CD8-positive, alpha-beta T cell (primary cell): ENCODE measurements at regions of chr17 and their contacts with region 1.

Region 1: GRCh38 chr17:21119247-21119918 is 7.4 kb upstream of the DHRS7B start:
- DNase-seq: peak; percentile 41 to 87 (median 71)
- ATAC-seq: peak; percentile 91
- H3K4me3 ChIP-seq: no peak overlapping the region
- H3K4me3 Mint-ChIP-seq: no peak overlapping the region
- H3K27ac ChIP-seq: no peak overlapping the region
- H3K27ac Mint-ChIP-seq: no peak overlapping the region
- H3K4me1 ChIP-seq: peaks cover 4% of the 10 kb centered on the region
- H3K4me1 Mint-ChIP-seq: peaks cover 8% of the 10 kb centered on the region
- H3K27me3 ChIP-seq: no peaks in the 10 kb centered on the region
- H3K27me3 Mint-ChIP-seq: peaks cover 3% of the 10 kb centered on the region
- CTCF ChIP-seq: peak; percentile 82

Region 2: DNA sequence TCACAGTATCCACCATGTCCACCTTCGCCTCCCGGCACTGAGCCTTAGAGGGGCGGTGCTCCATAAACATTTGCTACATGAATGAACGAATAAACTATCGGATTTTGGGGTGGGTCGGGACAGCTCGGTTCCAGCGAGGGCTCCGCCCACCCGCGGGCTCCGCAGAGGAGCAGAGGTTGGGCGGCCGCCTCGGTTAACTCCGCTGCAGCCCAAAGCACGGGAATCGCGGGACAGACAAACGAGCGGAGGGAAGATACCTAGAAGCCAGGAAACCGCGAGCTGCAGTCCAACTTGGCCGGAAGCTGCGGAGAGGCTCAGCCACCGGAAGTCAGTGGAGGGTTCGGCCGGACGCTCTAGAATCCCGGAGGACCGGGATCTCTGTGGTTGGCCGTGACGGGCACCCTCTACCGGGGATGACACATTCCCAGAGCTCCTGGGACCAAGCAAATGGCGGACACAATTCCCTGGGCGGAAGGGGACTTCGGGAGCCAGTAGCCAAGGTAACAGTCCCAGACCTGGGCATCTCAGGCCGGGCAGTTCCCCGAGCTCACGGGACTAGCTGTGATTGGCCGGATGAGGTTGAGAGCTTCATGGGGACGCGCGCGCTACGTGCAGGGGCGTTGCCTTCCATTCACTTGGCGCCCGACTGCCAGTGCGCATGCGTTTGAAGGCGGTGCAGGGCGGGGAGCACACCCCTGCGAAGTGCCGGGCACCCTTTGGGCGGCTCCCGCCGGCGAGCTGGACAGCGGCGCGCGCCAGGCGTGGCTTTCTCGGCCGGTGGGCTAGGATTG is 1741.6 kb before region 1 on chr17:
- CTCF ChIA-PET with region 1: no interaction called
- POLR2A ChIA-PET with region 1: no interaction called
- intact Hi-C with region 1: no loop called
- DNase-seq: peak; percentile 82 to 98 (median 93)
- ATAC-seq: peak; percentile 89
- H3K4me3 ChIP-seq: peak overlapping the region; percentile 81 to 96
- H3K4me3 Mint-ChIP-seq: peak overlapping the region; percentile 100
- H3K27ac ChIP-seq: peak overlapping the region; percentile 81 to 86
- H3K27ac Mint-ChIP-seq: peak overlapping the region; percentile 96
- H3K4me1 ChIP-seq: peaks cover 6% of the 10 kb centered on the region
- H3K4me1 Mint-ChIP-seq: peaks cover 15% of the 10 kb centered on the region
- H3K27me3 ChIP-seq: no peaks in the 10 kb centered on the region
- H3K27me3 Mint-ChIP-seq: no peaks in the 10 kb centered on the region
- CTCF ChIP-seq: no peak

Region 3: GRCh38 chr17:21108651-21109050 is 10.7 kb before region 1 on chr17:
- CTCF ChIA-PET with region 1: interaction called, 15 read pairs
- POLR2A ChIA-PET with region 1: interaction called, 3 read pairs
- intact Hi-C with region 1: no loop called
- DNase-seq: no peak
- ATAC-seq: no peak
- H3K4me3 ChIP-seq: no peak overlapping the region
- H3K4me3 Mint-ChIP-seq: no peak overlapping the region
- H3K27ac ChIP-seq: no peak overlapping the region
- H3K27ac Mint-ChIP-seq: no peak overlapping the region
- H3K4me1 ChIP-seq: no peaks in the 10 kb centered on the region
- H3K4me1 Mint-ChIP-seq: no peaks in the 10 kb centered on the region
- H3K27me3 ChIP-seq: no peaks in the 10 kb centered on the region
- H3K27me3 Mint-ChIP-seq: no peaks in the 10 kb centered on the region
- CTCF ChIP-seq: no peak

Region 4: DNA sequence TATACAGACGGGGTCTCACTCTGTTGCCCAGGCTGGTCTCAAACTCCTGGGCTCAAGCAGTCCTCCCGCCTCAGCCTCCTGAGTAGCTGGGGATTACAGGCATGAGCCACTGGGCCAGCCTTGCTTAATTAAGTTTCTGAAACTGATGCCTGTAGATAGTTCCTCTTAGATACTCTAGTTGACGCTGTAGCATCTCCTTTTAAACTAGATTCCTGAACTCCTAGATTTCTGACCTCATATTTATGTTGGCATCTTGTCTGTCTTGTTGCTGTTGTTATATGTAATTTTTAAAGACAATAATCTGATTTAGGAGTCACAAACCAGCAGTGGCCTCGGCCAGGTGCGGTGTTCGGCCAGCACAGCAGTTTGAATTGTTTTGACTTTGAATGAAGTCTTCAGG is 44.8 kb after region 1 on chr17:
- CTCF ChIA-PET with region 1: no interaction called
- POLR2A ChIA-PET with region 1: no interaction called
- intact Hi-C with region 1: no loop called
- DNase-seq: no peak
- ATAC-seq: no peak
- H3K4me3 ChIP-seq: no peak overlapping the region
- H3K4me3 Mint-ChIP-seq: no peak overlapping the region
- H3K27ac ChIP-seq: no peak overlapping the region
- H3K27ac Mint-ChIP-seq: no peak overlapping the region
- H3K4me1 ChIP-seq: no peaks in the 10 kb centered on the region
- H3K4me1 Mint-ChIP-seq: peaks cover 16% of the 10 kb centered on the region
- H3K27me3 ChIP-seq: no peaks in the 10 kb centered on the region
- H3K27me3 Mint-ChIP-seq: no peaks in the 10 kb centered on the region
- CTCF ChIP-seq: no peak

Region 5: DNA sequence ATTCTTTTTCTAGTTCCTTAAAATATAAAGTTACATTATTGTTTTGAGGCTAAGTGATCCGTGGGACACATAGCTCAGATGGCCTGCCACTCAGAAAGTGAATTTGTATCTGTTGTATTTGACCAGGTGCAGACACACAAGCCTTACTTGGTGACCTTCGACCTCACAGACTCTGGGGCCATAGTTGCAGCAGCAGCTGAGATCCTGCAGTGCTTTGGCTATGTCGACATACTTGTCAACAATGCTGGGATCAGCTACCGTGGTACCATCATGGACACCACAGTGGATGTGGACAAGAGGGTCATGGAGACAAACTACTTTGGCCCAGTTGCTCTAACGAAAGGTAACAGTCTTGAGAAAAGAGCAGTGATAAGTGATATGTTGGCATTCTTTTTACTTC is 64.1 kb after region 1 on chr17:
- CTCF ChIA-PET with region 1: interaction called, 3 read pairs
- POLR2A ChIA-PET with region 1: no interaction called
- intact Hi-C with region 1: loop called in 1 of 2 experiments (anchors 5 kb)
- DNase-seq: no peak
- ATAC-seq: no peak
- H3K4me3 ChIP-seq: no peak overlapping the region
- H3K4me3 Mint-ChIP-seq: no peak overlapping the region
- H3K27ac ChIP-seq: no peak overlapping the region
- H3K27ac Mint-ChIP-seq: peak overlapping the region; percentile 18
- H3K4me1 ChIP-seq: no peaks in the 10 kb centered on the region
- H3K4me1 Mint-ChIP-seq: no peaks in the 10 kb centered on the region
- H3K27me3 ChIP-seq: no peaks in the 10 kb centered on the region
- H3K27me3 Mint-ChIP-seq: no peaks in the 10 kb centered on the region
- CTCF ChIP-seq: no peak

Region 6: DNA sequence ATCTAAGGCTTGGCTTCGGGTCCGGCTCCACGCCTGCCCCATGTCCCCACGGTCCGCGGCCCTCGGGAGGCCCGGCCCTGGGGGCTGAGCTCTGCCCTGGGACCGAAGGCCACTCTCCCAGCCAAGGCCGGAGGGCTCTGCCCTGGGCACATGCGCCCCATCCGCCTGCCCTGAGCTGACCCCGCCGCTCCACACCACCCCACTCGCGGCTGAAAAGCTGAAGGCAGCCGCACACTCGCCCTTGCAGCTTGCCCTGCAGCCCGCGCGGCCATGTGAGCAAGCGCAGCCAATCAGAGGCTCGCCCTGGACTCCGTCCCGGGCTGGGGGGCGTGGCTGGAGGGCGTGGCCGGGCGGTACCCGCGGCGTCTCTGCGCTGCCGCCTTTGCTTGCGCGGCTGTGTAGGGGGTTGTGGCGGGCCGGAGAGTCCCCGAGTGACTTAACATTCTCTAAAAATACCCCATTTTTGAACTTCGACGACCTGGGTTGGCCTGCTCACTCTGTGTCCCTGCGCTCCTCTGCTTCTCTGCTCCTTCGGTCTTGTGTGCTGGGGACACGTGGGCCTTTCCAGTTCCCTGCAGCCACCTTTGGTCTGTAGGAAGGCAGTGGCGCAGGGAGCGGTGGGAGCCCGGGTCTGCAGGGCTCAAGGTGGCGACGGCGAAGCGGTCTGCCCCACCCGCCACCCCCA is 156.3 kb after region 1 on chr17:
- CTCF ChIA-PET with region 1: interaction called, 19 read pairs
- POLR2A ChIA-PET with region 1: interaction called, 12 read pairs
- intact Hi-C with region 1: no loop called
- DNase-seq: peak; percentile 83 to 98 (median 94)
- ATAC-seq: peak; percentile 84
- H3K4me3 ChIP-seq: peak overlapping the region; percentile 60 to 80
- H3K4me3 Mint-ChIP-seq: peak overlapping the region; percentile 87
- H3K27ac ChIP-seq: peak overlapping the region; percentile 57 to 75
- H3K27ac Mint-ChIP-seq: peak overlapping the region; percentile 90
- H3K4me1 ChIP-seq: peaks cover 37% of the 10 kb centered on the region
- H3K4me1 Mint-ChIP-seq: peaks cover 42% of the 10 kb centered on the region
- H3K27me3 ChIP-seq: no peaks in the 10 kb centered on the region
- H3K27me3 Mint-ChIP-seq: no peaks in the 10 kb centered on the region
- CTCF ChIP-seq: no peak